Activated naive CD4-positive, alpha-beta T cell treated with anti-CD3 and anti-CD28 coated beads for 36 hours (primary cell): ENCODE measurements at regions of chr9 and their contacts with region 1.

Region 1: DNA sequence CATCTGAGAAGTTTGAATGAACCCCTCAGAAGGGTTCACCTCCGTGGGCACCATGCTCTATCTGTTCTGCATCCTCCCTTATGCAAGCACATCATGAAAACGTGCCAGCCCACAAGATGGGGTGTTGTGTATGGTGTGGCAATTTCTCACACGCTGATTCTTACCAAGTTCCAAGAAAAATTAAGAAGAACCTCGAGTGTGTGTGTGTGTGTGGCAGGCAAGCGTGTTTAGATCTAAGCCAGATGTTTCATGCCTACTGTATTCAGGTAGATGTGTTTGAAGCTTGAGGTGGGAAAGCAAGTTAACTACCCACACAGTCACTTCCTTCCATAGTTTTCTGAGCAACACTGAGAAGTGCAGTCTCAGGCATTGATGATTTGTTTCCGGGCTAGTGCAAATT is 77.7 kb upstream of the GNA14 start:
- DNase-seq: peak; percentile 59
- H3K4me3 Mint-ChIP-seq: no peak overlapping the region
- H3K27ac Mint-ChIP-seq: peak overlapping the region; percentile 57
- H3K4me1 Mint-ChIP-seq: peaks cover 49% of the 10 kb centered on the region
- H3K27me3 Mint-ChIP-seq: no peaks in the 10 kb centered on the region

Region 2: GRCh38 chr9:77562019-77562748 is 163.6 kb before region 1 on chr9:
- CTCF ChIA-PET with region 1: no interaction called
- intact Hi-C with region 1: loop called (anchors 5 kb)
- DNase-seq: no peak
- H3K4me3 Mint-ChIP-seq: no peak overlapping the region
- H3K27ac Mint-ChIP-seq: no peak overlapping the region
- H3K4me1 Mint-ChIP-seq: peaks cover 7% of the 10 kb centered on the region
- H3K27me3 Mint-ChIP-seq: peaks cover 10% of the 10 kb centered on the region

Region 3: GRCh38 chr9:77744841-77745430 is 19.1 kb after region 1 on chr9:
- CTCF ChIA-PET with region 1: interaction called, 7 read pairs
- intact Hi-C with region 1: loop called (anchors 1 kb)
- DNase-seq: no peak
- H3K4me3 Mint-ChIP-seq: no peak overlapping the region
- H3K27ac Mint-ChIP-seq: no peak overlapping the region
- H3K4me1 Mint-ChIP-seq: peaks cover 45% of the 10 kb centered on the region
- H3K27me3 Mint-ChIP-seq: no peaks in the 10 kb centered on the region

Region 4: GRCh38 chr9:78213712-78214111 is 487.9 kb after region 1 on chr9:
- CTCF ChIA-PET with region 1: no interaction called
- intact Hi-C with region 1: no loop called
- DNase-seq: no peak
- H3K4me3 Mint-ChIP-seq: no peak overlapping the region
- H3K27ac Mint-ChIP-seq: no peak overlapping the region
- H3K4me1 Mint-ChIP-seq: peaks cover 31% of the 10 kb centered on the region
- H3K27me3 Mint-ChIP-seq: no peaks in the 10 kb centered on the region

Region 5: DNA sequence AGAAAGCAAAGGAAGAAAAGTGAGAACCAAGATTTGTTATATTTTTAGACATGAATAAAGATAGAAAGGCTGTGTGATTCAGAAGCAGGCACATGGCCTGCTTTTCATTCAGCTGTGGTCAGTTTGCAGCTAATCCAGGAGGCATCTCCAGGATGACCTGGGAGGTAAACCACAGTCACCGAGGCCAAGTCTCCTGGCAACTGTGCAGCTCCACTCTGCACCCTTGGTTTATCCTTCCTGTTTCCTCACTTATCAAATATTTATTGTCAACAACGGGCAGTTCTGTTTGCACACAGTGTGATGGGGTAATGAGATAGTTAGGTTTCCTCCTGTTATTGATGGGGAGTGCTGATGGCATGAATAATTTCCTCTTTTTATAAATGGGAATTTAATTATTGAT is 814.1 kb after region 1 on chr9:
- CTCF ChIA-PET with region 1: no interaction called
- intact Hi-C with region 1: no loop called
- DNase-seq: no peak
- H3K4me3 Mint-ChIP-seq: no peak overlapping the region
- H3K27ac Mint-ChIP-seq: no peak overlapping the region
- H3K4me1 Mint-ChIP-seq: no peaks in the 10 kb centered on the region
- H3K27me3 Mint-ChIP-seq: peaks cover 2% of the 10 kb centered on the region